Activated naive CD4-positive, alpha-beta T cell treated with anti-CD3 and anti-CD28 coated beads for 36 hours (primary cell): ENCODE measurements at regions of chr4 and their contacts with region 1.

Region 1: GRCh38 chr4:104966349-104967033 is 180.2 kb upstream of the TET2 start:
- DNase-seq: peak; percentile 73
- H3K4me3 Mint-ChIP-seq: no peak overlapping the region
- H3K27ac Mint-ChIP-seq: peak overlapping the region; percentile 82
- H3K4me1 Mint-ChIP-seq: peaks cover 12% of the 10 kb centered on the region
- H3K27me3 Mint-ChIP-seq: peaks cover 12% of the 10 kb centered on the region

Region 2: GRCh38 chr4:104930298-104930697 is 36.2 kb before region 1 on chr4:
- CTCF ChIA-PET with region 1: no interaction called
- intact Hi-C with region 1: loop called (anchors 2 kb)
- DNase-seq: no peak
- H3K4me3 Mint-ChIP-seq: no peak overlapping the region
- H3K27ac Mint-ChIP-seq: no peak overlapping the region
- H3K4me1 Mint-ChIP-seq: peaks cover 25% of the 10 kb centered on the region
- H3K27me3 Mint-ChIP-seq: no peaks in the 10 kb centered on the region

Region 3: GRCh38 chr4:104938624-104939023 is 27.9 kb before region 1 on chr4:
- CTCF ChIA-PET with region 1: no interaction called
- intact Hi-C with region 1: loop called (anchors 2 kb)
- DNase-seq: peak; percentile 36
- H3K4me3 Mint-ChIP-seq: no peak overlapping the region
- H3K27ac Mint-ChIP-seq: no peak overlapping the region
- H3K4me1 Mint-ChIP-seq: peaks cover 5% of the 10 kb centered on the region
- H3K27me3 Mint-ChIP-seq: no peaks in the 10 kb centered on the region

Region 4: GRCh38 chr4:105113800-105114199 is 147.3 kb after region 1 on chr4:
- CTCF ChIA-PET with region 1: no interaction called
- intact Hi-C with region 1: no loop called
- DNase-seq: no peak
- H3K4me3 Mint-ChIP-seq: no peak overlapping the region
- H3K27ac Mint-ChIP-seq: no peak overlapping the region
- H3K4me1 Mint-ChIP-seq: no peaks in the 10 kb centered on the region
- H3K27me3 Mint-ChIP-seq: peaks cover 15% of the 10 kb centered on the region

Region 5: GRCh38 chr4:105158837-105159236 is 192.3 kb after region 1 on chr4:
- CTCF ChIA-PET with region 1: no interaction called
- intact Hi-C with region 1: no loop called
- DNase-seq: no peak
- H3K4me3 Mint-ChIP-seq: no peak overlapping the region
- H3K27ac Mint-ChIP-seq: no peak overlapping the region
- H3K4me1 Mint-ChIP-seq: peaks cover 31% of the 10 kb centered on the region
- H3K27me3 Mint-ChIP-seq: no peaks in the 10 kb centered on the region

Region 6: GRCh38 chr4:105191621-105192210 is 225.2 kb after region 1 on chr4:
- CTCF ChIA-PET with region 1: no interaction called
- intact Hi-C with region 1: loop called (anchors 2 kb)
- DNase-seq: no peak
- H3K4me3 Mint-ChIP-seq: no peak overlapping the region
- H3K27ac Mint-ChIP-seq: peak overlapping the region; percentile 87
- H3K4me1 Mint-ChIP-seq: peaks cover 85% of the 10 kb centered on the region
- H3K27me3 Mint-ChIP-seq: no peaks in the 10 kb centered on the region